ENCODE measurements at regions of chr3 and their contacts with region 1.

Region 1: GRCh38 chr3:150870396-150870795 is 34.8 kb downstream of the MINDY4B start:
- DNase-seq: no peak
- ATAC-seq: no peak
- H3K4me3 ChIP-seq: no peak overlapping the region
- H3K27ac ChIP-seq: no peak overlapping the region
- H3K4me1 ChIP-seq: no peaks in the 10 kb centered on the region
- CTCF ChIP-seq: no peak
- EP300 ChIP-seq: no peak
- POLR2A ChIP-seq: no peak
- RAD21 ChIP-seq: no peak

Region 2: GRCh38 chr3:150830094-150830681 is 40.2 kb before region 1 on chr3:
- CTCF ChIA-PET with region 1: interaction called, 11 read pairs
- POLR2A ChIA-PET with region 1: no interaction called
- DNase-seq: peak; percentile 16 to 32
- ATAC-seq: peak; percentile 64 to 85; a peak in 4 of 6 replicates
- H3K4me3 ChIP-seq: no peak overlapping the region
- H3K27ac ChIP-seq: no peak overlapping the region
- H3K4me1 ChIP-seq: no peaks in the 10 kb centered on the region
- CTCF ChIP-seq: 0 out of 3 replicates have a peak, but pooled peaks have one; percentile 11
- EP300 ChIP-seq: no peak
- POLR2A ChIP-seq: no peak
- RAD21 ChIP-seq: peak in 1 of 2 experiments; percentile 8; a peak in 1 of 5 replicates

Region 3: GRCh38 chr3:150850191-150850590 is 20.2 kb before region 1 on chr3:
- CTCF ChIA-PET with region 1: interaction called, 11 read pairs
- POLR2A ChIA-PET with region 1: no interaction called
- DNase-seq: no peak
- ATAC-seq: no peak
- H3K4me3 ChIP-seq: no peak overlapping the region
- H3K27ac ChIP-seq: no peak overlapping the region
- H3K4me1 ChIP-seq: no peaks in the 10 kb centered on the region
- CTCF ChIP-seq: no peak
- EP300 ChIP-seq: no peak
- POLR2A ChIP-seq: no peak
- RAD21 ChIP-seq: no peak

Measured in A549 (cell line).